Activated CD4-positive, alpha-beta memory T cell treated with anti-CD3 and anti-CD28 coated beads for 36 hours (primary cell): ENCODE measurements at regions of chr3 and their contacts with region 1.

Region 1: DNA sequence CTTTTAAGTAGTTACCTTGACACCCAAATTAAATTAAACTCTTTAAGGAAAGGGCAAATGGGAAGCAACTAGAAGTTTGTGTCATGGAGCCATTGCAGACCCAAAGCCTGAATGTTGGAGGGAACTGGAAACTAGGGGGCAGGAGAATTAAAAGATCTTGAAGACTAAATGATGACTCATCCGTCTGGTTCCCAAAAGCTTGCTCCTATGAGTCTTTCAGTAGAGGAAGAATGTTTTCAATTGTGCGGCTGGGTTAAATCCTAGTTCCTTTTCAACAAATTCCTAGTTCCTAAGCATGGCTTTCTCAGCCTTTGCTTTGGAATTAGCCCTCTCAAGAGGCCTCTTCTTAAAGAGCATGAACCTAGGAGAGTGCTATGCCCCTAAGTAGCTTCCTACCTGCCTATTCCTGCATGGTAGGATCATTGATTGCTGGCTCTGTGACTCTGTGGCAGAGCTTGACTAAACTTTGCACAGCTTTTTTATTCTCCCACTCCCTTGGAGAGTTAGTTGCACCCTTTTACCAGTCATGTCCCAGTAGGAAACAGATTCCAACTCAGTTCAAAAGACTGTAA is 17.7 kb downstream of the CLEC3B start:
- DNase-seq: no peak
- H3K4me3 Mint-ChIP-seq: no peak overlapping the region
- H3K27ac Mint-ChIP-seq: no peak overlapping the region
- H3K4me1 Mint-ChIP-seq: peaks cover 16% of the 10 kb centered on the region
- H3K27me3 Mint-ChIP-seq: peaks cover 10% of the 10 kb centered on the region

Region 2: GRCh38 chr3:44814751-44815150 is 229.1 kb before region 1 on chr3:
- CTCF ChIA-PET with region 1: no interaction called
- POLR2A ChIA-PET with region 1: no interaction called
- intact Hi-C with region 1: no loop called
- DNase-seq: no peak
- H3K4me3 Mint-ChIP-seq: no peak overlapping the region
- H3K27ac Mint-ChIP-seq: no peak overlapping the region
- H3K4me1 Mint-ChIP-seq: no peaks in the 10 kb centered on the region
- H3K27me3 Mint-ChIP-seq: no peaks in the 10 kb centered on the region

Region 3: DNA sequence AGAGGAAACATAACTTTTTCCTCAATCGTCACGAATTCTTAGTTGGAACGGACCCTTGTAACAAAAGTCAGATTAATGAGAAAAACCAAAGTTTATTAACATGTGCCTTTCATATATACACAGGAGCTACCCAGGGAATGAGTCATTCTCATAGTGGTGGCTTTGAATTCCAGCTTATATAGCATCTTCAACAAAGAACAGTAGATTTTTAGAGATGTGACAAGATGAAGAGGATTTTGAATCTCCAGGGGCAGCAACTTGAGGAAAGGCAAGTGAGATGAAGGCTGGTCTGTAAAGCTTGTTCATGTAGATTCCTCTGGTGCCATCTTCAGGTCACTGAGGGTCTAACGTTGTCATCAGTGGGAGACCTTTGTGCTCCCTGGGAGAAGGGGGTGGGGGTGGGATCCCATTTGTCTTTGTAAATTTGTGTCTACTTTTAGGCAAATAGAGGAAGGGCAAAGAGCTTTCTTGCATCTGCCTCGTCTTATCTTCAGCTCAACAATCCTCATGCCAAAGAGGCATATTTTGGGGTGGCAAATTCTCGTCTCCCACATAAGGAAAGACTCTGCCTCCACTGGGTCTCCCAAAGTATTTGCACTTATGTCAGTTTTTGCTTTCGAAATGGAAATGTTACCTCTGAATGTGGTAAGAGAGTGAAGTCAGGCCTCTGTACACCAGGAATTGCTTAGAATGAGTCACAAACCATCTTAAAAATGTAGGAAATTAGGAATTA is 11.8 kb after region 1 on chr3:
- CTCF ChIA-PET with region 1: interaction called, 22 read pairs
- POLR2A ChIA-PET with region 1: no interaction called
- intact Hi-C with region 1: no loop called
- DNase-seq: no peak
- H3K4me3 Mint-ChIP-seq: no peak overlapping the region
- H3K27ac Mint-ChIP-seq: no peak overlapping the region
- H3K4me1 Mint-ChIP-seq: peaks cover 18% of the 10 kb centered on the region
- H3K27me3 Mint-ChIP-seq: peaks cover 4% of the 10 kb centered on the region

Region 4: DNA sequence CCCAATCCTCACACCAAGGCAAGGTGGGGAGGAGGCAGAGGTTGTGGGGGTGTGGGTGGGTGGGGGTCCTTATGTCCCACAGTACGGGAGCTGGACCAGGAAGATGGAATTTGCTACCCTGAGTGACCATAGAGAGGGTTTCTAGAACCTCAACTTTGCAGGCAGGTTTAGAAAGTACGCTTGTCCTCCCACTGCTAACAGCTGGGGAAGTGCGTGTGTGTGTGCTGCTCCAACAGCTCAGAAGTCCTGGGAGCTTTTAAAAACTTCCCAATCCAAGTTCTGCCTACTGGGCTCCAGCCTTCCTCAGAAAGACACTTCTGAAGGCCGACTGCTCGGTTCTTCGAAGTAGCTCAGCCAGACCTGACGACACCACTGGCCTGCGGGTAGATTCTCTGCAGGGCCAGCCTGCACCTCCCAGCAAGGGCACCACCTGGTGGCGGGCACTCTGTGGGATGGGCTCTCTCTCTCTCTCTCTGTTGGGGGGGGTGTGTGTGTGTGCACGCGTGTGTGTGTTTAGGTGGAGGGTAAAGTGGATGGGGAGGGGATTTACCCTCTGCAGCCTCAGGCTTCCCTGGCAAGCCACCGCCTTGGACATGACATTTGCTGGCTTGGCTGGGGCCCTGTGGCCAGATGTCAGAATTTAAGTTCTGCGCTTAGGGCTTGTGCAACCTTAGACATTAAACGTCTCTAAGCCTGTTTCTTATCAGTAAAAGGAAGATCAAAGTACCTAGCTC is 166.7 kb after region 1 on chr3:
- CTCF ChIA-PET with region 1: interaction called, 530 read pairs
- POLR2A ChIA-PET with region 1: no interaction called
- intact Hi-C with region 1: loop called (anchors 1 kb)
- DNase-seq: peak; percentile 86
- H3K4me3 Mint-ChIP-seq: no peak overlapping the region
- H3K27ac Mint-ChIP-seq: no peak overlapping the region
- H3K4me1 Mint-ChIP-seq: peaks cover 18% of the 10 kb centered on the region
- H3K27me3 Mint-ChIP-seq: peaks cover 11% of the 10 kb centered on the region

Region 5: DNA sequence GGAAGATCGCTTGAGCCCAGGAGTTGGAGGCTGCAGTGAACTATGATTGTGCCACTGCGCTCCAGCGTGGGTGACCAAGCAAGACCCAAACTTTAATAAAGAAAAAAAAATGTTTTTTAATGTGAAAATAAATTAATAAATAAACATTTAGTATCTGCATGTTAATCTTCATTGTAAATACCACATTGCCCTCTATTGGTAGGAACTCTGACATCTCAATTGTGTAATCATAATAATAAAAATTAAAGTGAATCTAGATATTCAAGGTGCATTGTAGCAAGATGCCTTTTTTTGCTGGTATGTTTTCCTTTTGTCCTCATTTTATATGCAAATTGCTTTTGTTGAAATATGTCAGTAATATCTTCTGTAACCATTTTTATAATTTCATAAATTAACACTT is 455.7 kb after region 1 on chr3:
- CTCF ChIA-PET with region 1: interaction called, 11 read pairs
- POLR2A ChIA-PET with region 1: no interaction called
- intact Hi-C with region 1: loop called (anchors 2 kb)
- DNase-seq: no peak
- H3K4me3 Mint-ChIP-seq: no peak overlapping the region
- H3K27ac Mint-ChIP-seq: no peak overlapping the region
- H3K4me1 Mint-ChIP-seq: peaks cover 3% of the 10 kb centered on the region
- H3K27me3 Mint-ChIP-seq: no peaks in the 10 kb centered on the region